ENCODE measurements at regions of chr1 and their contacts with region 1.

Region 1: GRCh38 chr1:51535006-51535592 is 16.0 kb upstream of the EPS15 start:
- DNase-seq: peak; percentile 45
- H3K4me3 ChIP-seq: no peak overlapping the region
- H3K27ac ChIP-seq: no peak overlapping the region
- H3K4me1 ChIP-seq: peaks cover 5% of the 10 kb centered on the region
- H3K27me3 ChIP-seq: no peaks in the 10 kb centered on the region
- CTCF ChIP-seq: peak; percentile 66 to 79

Region 2: GRCh38 chr1:51296383-51297357 is 238.4 kb before region 1 on chr1:
- CTCF ChIA-PET with region 1: no interaction called
- dilution Hi-C with region 1: no loop called
- in situ Hi-C with region 1: no loop called
- intact Hi-C with region 1: loop called (anchors 5 kb)
- DNase-seq: peak; percentile 62
- H3K4me3 ChIP-seq: peak overlapping the region in 1 of 3 experiments; percentile 28
- H3K27ac ChIP-seq: no peak overlapping the region
- H3K4me1 ChIP-seq: peaks cover 7% of the 10 kb centered on the region
- H3K27me3 ChIP-seq: no peaks in the 10 kb centered on the region
- CTCF ChIP-seq: peak; percentile 89 to 98

Region 3: GRCh38 chr1:51341876-51342496 is 193.1 kb before region 1 on chr1:
- CTCF ChIA-PET with region 1: no interaction called
- dilution Hi-C with region 1: no loop called
- in situ Hi-C with region 1: no loop called
- intact Hi-C with region 1: loop called (anchors 10 kb)
- DNase-seq: no peak
- H3K4me3 ChIP-seq: no peak overlapping the region
- H3K27ac ChIP-seq: no peak overlapping the region
- H3K4me1 ChIP-seq: peaks cover 6% of the 10 kb centered on the region
- H3K27me3 ChIP-seq: no peaks in the 10 kb centered on the region
- CTCF ChIP-seq: no peak

Region 4: GRCh38 chr1:51421964-51422363 is 113.1 kb before region 1 on chr1:
- CTCF ChIA-PET with region 1: interaction called, 3 read pairs
- dilution Hi-C with region 1: no loop called
- in situ Hi-C with region 1: no loop called
- intact Hi-C with region 1: loop called (anchors 10 kb)
- DNase-seq: peak; percentile 25
- H3K4me3 ChIP-seq: no peak overlapping the region
- H3K27ac ChIP-seq: peak overlapping the region; percentile 29
- H3K4me1 ChIP-seq: no peaks in the 10 kb centered on the region
- H3K27me3 ChIP-seq: no peaks in the 10 kb centered on the region
- CTCF ChIP-seq: no peak

Region 5: DNA sequence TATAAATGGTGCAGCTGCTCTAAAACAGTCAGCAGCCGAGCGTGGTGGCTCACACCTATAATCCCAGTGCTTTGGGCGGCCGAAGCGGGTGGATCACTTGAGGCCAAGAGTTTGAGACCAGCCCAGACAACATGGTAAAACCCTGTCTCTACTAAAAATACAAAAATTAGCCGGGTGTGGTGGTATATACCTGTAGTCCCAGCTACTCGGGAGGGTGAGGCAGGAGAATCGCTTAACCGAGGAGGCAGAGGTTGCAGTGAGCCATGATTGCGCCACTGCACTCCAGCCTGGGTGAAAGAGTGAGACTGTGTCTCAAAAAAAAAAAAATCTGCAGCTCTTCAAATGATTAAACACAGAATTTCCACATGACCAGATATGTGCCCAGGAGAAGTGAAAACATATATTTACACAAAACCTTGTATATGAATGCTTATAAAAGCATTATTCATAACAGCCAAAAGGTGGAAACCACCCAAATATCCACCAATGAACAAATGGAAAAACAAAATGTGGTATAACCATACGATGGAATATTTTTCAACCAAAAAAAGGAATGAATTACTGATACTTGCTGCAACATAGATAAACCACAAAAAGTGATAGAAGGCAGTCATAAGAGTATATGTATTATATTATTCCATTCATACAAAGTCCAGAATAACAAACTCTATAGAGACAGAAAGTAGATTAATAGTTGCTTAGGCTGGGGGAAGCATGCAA is 30.1 kb before region 1 on chr1:
- CTCF ChIA-PET with region 1: no interaction called
- dilution Hi-C with region 1: no loop called
- in situ Hi-C with region 1: no loop called
- intact Hi-C with region 1: no loop called
- DNase-seq: no peak
- H3K4me3 ChIP-seq: no peak overlapping the region
- H3K27ac ChIP-seq: no peak overlapping the region
- H3K4me1 ChIP-seq: no peaks in the 10 kb centered on the region
- H3K27me3 ChIP-seq: no peaks in the 10 kb centered on the region
- CTCF ChIP-seq: no peak

Region 6: GRCh38 chr1:51553911-51554310 is 18.8 kb after region 1 on chr1:
- CTCF ChIA-PET with region 1: interaction called, 21 read pairs
- dilution Hi-C with region 1: no loop called
- in situ Hi-C with region 1: no loop called
- intact Hi-C with region 1: no loop called
- DNase-seq: peak; percentile 57
- H3K4me3 ChIP-seq: no peak overlapping the region
- H3K27ac ChIP-seq: no peak overlapping the region
- H3K4me1 ChIP-seq: peaks cover 12% of the 10 kb centered on the region
- H3K27me3 ChIP-seq: no peaks in the 10 kb centered on the region
- CTCF ChIP-seq: no peak